Panc1 (cell line): ENCODE measurements at regions of chr2 and their contacts with region 1.

Region 1: GRCh38 chr2:64914735-64915509 is 74.3 kb upstream of the SLC1A4 start:
- DNase-seq: no peak
- ATAC-seq: no peak
- H3K4me3 ChIP-seq: no peak overlapping the region
- H3K27ac ChIP-seq: no peak overlapping the region
- H3K4me1 ChIP-seq: no peaks in the 10 kb centered on the region
- H3K27me3 ChIP-seq: no peaks in the 10 kb centered on the region
- CTCF ChIP-seq: no peak

Region 2: GRCh38 chr2:65033178-65033577 is 118.3 kb after region 1 on chr2:
- CTCF ChIA-PET with region 1: interaction called, 12 read pairs
- POLR2A ChIA-PET with region 1: no interaction called
- in situ Hi-C with region 1: no loop called
- intact Hi-C with region 1: no loop called
- DNase-seq: no peak
- ATAC-seq: no peak
- H3K4me3 ChIP-seq: no peak overlapping the region
- H3K27ac ChIP-seq: no peak overlapping the region
- H3K4me1 ChIP-seq: no peaks in the 10 kb centered on the region
- H3K27me3 ChIP-seq: no peaks in the 10 kb centered on the region
- CTCF ChIP-seq: no peak; the same call in 1 of the 2 replicates

Region 3: GRCh38 chr2:65040400-65041261 is 125.7 kb after region 1 on chr2:
- CTCF ChIA-PET with region 1: interaction called, 5 read pairs
- POLR2A ChIA-PET with region 1: interaction called, 3 read pairs
- in situ Hi-C with region 1: no loop called
- intact Hi-C with region 1: loop called (anchors 1 kb)
- DNase-seq: peak; percentile 74
- ATAC-seq: peak; percentile 99
- H3K4me3 ChIP-seq: 0 out of 4 replicates have a peak overlapping the region, but pooled peaks of 1 of the 2 experiments have one; percentile 14
- H3K27ac ChIP-seq: no peak overlapping the region
- H3K4me1 ChIP-seq: no peaks in the 10 kb centered on the region
- H3K27me3 ChIP-seq: no peaks in the 10 kb centered on the region
- CTCF ChIP-seq: peak; percentile 93

Region 4: DNA sequence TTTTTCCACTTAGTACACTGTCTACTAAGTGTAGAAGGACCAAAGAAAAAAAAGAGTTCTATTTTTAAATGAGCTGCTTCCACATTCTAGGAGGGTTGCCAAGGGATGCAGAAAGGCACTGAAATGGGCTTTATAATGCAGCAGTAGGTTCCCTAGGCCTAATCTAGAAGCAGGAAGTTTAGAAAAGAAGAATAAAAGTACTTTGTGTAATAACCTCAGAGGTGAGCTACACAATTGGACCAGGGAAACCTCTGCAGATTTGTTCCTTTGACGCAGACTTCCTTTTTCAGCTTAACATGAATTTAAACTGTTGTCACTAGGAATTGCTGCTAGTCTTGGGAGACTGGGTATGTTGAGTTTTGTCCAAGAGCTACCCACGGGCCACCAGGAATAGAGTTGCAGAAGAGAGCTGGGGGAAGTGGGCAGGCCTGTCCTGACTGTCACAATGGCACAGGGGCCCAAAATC is 249.5 kb after region 1 on chr2:
- CTCF ChIA-PET with region 1: interaction called, 5 read pairs
- POLR2A ChIA-PET with region 1: no interaction called
- in situ Hi-C with region 1: no loop called
- intact Hi-C with region 1: loop called (anchors 10 kb)
- DNase-seq: no peak
- ATAC-seq: no peak
- H3K4me3 ChIP-seq: no peak overlapping the region
- H3K27ac ChIP-seq: no peak overlapping the region
- H3K4me1 ChIP-seq: no peaks in the 10 kb centered on the region
- H3K27me3 ChIP-seq: no peaks in the 10 kb centered on the region
- CTCF ChIP-seq: no peak

Region 5: GRCh38 chr2:65576861-65577601 is 662.1 kb after region 1 on chr2:
- CTCF ChIA-PET with region 1: interaction called, 4 read pairs
- POLR2A ChIA-PET with region 1: interaction called, 11 read pairs
- in situ Hi-C with region 1: no loop called
- intact Hi-C with region 1: no loop called
- DNase-seq: peak; percentile 84
- ATAC-seq: peak; percentile 90
- H3K4me3 ChIP-seq: peak overlapping the region in 1 of 2 experiments; percentile 1; a peak in 1 of 4 replicates
- H3K27ac ChIP-seq: peak overlapping the region; percentile 67
- H3K4me1 ChIP-seq: peaks cover 14% of the 10 kb centered on the region
- H3K27me3 ChIP-seq: no peaks in the 10 kb centered on the region
- CTCF ChIP-seq: no peak